HAP-1 (cell line): ENCODE measurements at regions of chr3 and their contacts with region 1.

Region 1: GRCh38 chr3:127455541-127456450 is 134.7 kb downstream of the TPRA1 start:
- DNase-seq: peak; percentile 66 to 89
- H3K4me3 ChIP-seq: no peak overlapping the region; the same call in 1 of the 2 replicates
- H3K4me1 ChIP-seq: no peaks in the 10 kb centered on the region; the same call in 1 of the 2 replicates
- H3K27me3 ChIP-seq: peaks cover 3% of the 10 kb centered on the region; the same call in 1 of the 2 replicates

Region 2: GRCh38 chr3:126679318-126679751 is 776.5 kb before region 1 on chr3:
- in situ Hi-C with region 1: loop called (anchors 25 kb)
- DNase-seq: peak; percentile 45 to 91
- H3K4me3 ChIP-seq: no peak overlapping the region
- H3K4me1 ChIP-seq: no peaks in the 10 kb centered on the region
- H3K27me3 ChIP-seq: no peaks in the 10 kb centered on the region; the same call in none of the 2 replicates

Region 3: DNA sequence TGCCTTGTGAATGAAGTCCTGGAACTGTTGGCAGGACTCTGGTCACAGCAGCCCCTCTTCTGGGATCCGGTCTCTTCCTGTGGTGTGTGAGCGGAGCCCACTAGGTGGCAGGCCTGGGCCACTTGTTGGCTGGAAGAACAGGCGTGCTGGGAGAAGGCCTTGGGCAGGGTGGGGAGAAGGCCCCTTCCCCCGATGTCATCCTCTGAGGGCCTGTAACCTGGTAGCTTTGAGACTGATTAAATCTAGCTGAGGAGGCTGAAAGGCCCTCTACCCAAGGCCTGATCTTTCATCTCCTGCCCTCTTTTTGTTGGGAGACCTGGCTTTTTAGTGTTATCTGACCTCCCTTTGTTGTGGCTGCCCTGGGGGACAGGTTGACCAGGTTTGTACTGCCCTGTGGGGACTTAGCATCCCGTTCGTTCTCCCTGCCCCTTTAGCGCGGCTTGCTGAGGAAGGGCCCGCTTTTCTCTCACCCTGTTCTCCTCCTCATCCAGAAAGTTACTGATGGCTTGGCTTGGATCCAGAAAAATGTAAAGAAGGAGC is 703.4 kb before region 1 on chr3:
- in situ Hi-C with region 1: loop called (anchors 5 kb)
- DNase-seq: peak; percentile 58 to 83
- H3K4me3 ChIP-seq: no peak overlapping the region
- H3K4me1 ChIP-seq: no peaks in the 10 kb centered on the region
- H3K27me3 ChIP-seq: no peaks in the 10 kb centered on the region

Region 4: GRCh38 chr3:126982471-126983175 is 473.2 kb before region 1 on chr3 and contains the start of gene PLXNA1:
- in situ Hi-C with region 1: loop called (anchors 10 kb)
- DNase-seq: peak; percentile 60 to 78
- H3K4me3 ChIP-seq: peak within 1 kb of the TSS; percentile 66
- H3K4me1 ChIP-seq: peaks cover 5% of the 10 kb centered on the region; the same call in 1 of the 2 replicates
- H3K27me3 ChIP-seq: peaks cover 7% of the 10 kb centered on the region; the same call in 1 of the 2 replicates